Prostate gland (tissue), 2 donors: ENCODE measurements at regions of chr5 and their contacts with region 1.

Region 1: DNA sequence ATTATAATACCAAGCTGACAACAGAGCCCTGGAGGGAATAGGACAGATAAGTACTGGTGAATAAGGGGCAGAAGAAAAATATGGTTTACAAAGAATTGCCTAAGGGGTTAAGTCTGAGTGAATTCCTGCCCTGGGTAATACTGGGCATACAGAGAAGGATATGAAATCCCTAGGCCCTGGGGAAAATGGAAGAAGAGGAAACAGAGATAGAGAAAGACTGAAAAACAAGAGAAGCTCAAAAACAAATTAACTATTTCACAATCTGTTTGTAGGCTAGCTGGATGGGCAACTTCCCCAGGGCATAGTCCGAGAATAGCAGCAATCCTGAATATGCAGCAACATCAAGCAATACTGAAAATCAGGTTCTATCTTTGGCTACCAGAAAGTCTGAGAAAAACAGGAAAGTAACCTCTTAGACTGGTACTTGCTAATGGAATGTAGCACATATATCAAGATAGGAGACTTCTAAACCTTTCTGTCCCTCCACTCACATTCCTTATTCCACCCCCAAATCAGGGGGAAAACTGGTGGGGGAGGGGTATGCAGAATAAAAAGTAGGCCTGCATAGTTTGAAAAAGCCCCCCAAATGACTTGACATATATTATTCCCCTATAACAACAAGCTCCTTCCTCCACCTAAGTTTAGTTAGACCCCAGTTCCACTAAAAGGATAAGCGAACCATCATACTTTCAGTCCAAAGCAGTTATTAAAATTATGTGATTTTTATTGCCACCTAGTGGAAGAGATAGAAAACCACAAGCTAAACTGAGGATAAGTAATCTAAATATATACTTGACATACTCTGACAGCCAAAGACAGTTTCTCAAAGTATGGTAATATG is 20.6 kb downstream of the SLC38A9 start:
- DNase-seq: no peak
- H3K4me3 ChIP-seq: peak overlapping the region in 1 of 2 donors; percentile 2
- H3K27ac ChIP-seq: peak overlapping the region; percentile 58 to 61
- H3K4me1 ChIP-seq: peaks cover 15% of the 10 kb centered on the region
- H3K27me3 ChIP-seq: no peaks in the 10 kb centered on the region
- CTCF ChIP-seq: peak; percentile 33 to 86 (median 80)
- POLR2A ChIP-seq: no peak

Region 2: GRCh38 chr5:55324815-55325418 is 366.6 kb before region 1 on chr5:
- intact Hi-C with region 1: loop called (anchors 5 kb)
- DNase-seq: no peak
- H3K4me3 ChIP-seq: no peak overlapping the region
- H3K27ac ChIP-seq: no peak overlapping the region
- H3K4me1 ChIP-seq: no peaks in the 10 kb centered on the region
- H3K27me3 ChIP-seq: no peaks in the 10 kb centered on the region
- CTCF ChIP-seq: peak in 3 of 4 experiments; percentile 42 to 72 (median 65)
- POLR2A ChIP-seq: no peak

Region 3: GRCh38 chr5:55344392-55344992 is 347.0 kb before region 1 on chr5:
- intact Hi-C with region 1: loop called (anchors 5 kb)
- DNase-seq: peak; percentile 74
- H3K4me3 ChIP-seq: no peak overlapping the region
- H3K27ac ChIP-seq: no peak overlapping the region
- H3K4me1 ChIP-seq: no peaks in the 10 kb centered on the region
- H3K27me3 ChIP-seq: no peaks in the 10 kb centered on the region
- CTCF ChIP-seq: peak; percentile 52 to 87 (median 83)
- POLR2A ChIP-seq: no peak

Region 4: GRCh38 chr5:55406292-55406691 is 285.2 kb before region 1 on chr5:
- intact Hi-C with region 1: loop called (anchors 1 kb)
- DNase-seq: no peak
- H3K4me3 ChIP-seq: no peak overlapping the region
- H3K27ac ChIP-seq: no peak overlapping the region
- H3K4me1 ChIP-seq: no peaks in the 10 kb centered on the region
- H3K27me3 ChIP-seq: no peaks in the 10 kb centered on the region
- CTCF ChIP-seq: no peak
- POLR2A ChIP-seq: no peak